Activated CD4-positive, alpha-beta memory T cell treated with anti-CD3 and anti-CD28 coated beads for 36 hours (primary cell): ENCODE measurements at regions of chr6 and their contacts with region 1.

Region 1: DNA sequence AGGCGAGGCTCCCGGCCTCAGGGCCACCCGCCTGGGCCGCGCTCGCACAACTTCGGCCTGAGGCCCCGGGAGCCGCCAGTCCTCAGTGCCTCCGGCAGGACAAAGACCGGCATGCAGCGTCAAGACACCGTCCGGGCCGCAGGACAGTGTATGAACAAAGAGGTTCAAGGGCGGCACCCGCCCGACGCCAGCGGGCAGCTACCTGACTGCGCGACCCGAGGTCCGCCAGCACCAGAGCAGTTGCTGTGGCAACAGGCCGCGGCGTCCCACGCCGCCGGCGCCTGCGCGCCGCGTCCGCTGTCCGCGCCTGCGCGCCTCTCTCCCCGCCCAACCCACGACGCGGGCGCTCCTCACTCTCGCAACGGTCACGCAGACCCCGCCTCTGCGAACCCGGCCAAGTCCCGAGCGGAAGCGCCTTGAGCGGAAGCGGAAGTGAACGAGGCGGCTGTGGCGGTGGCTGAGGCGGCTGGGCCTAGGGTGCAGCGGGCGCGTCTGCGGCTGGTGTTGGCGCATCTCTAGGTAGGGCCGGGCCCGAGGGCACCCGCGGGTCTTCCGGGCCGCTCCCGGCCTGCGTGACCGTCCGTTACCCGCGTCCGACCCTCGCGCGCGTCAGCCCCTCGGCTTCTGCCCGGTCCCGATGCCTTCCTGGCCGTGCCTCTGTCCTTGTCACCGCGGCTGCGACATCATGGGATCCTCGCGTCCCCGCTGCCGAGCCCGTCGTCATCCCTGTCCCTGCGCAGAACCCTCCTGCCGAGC is at the start of gene FAM120B:
- DNase-seq: peak; percentile 96
- H3K4me3 Mint-ChIP-seq: peak within 1 kb of the TSS; percentile 96
- H3K27ac Mint-ChIP-seq: peak within 1 kb of the TSS; percentile 87
- H3K4me1 Mint-ChIP-seq: peaks cover 41% of the 10 kb centered on the region
- H3K27me3 Mint-ChIP-seq: peaks cover 12% of the 10 kb centered on the region
- total RNA-seq, gene FAM120B: 18.4 to 20.0 TPM

Region 2: DNA sequence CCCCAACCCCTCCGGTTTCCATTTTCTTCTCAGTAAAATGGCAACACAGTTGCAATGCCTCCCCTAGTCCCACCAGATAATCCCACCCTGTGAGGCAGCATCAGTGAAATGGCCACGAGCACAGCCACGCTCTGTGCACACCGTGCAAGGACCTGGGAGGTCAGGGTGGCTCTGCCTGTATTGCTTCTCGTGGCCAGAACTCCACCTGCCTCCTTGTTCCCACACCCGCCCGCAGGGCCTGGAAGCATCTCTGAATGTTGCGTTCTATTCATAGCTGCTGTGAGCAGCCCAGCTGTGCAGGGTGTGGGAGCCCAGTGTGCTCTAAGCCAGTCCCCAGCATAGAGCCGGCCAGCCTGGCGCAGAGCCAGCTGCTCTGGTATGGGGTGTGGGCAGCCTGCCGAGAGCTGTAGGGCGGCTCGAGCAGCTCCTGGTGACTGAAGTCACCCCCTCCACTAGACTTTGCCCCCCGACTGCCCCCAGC is 176.8 kb before region 1 on chr6:
- CTCF ChIA-PET with region 1: no interaction called
- POLR2A ChIA-PET with region 1: no interaction called
- intact Hi-C with region 1: no loop called
- DNase-seq: no peak
- H3K4me3 Mint-ChIP-seq: no peak overlapping the region
- H3K27ac Mint-ChIP-seq: no peak overlapping the region
- H3K4me1 Mint-ChIP-seq: no peaks in the 10 kb centered on the region
- H3K27me3 Mint-ChIP-seq: peaks cover 3% of the 10 kb centered on the region

Region 3: DNA sequence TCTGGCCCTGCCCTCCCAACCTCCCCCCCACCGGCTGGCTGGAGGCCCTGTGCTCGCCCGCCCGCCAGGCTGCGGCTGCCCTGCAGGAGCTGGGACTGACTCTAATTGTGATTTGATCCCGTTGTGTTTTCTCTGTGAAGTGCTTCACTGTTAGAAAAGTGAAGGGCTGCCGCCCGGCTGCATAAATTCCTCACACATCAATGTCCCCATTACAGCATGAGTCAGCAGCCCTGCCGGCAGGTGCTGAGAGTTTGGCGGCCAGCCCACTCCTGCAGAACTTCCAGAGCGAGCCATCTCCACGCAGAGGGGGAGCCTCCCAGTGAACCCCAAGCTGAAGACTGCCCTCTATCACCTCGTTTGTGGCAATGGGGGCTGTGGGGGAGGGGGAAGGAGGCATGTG is 153.5 kb before region 1 on chr6:
- CTCF ChIA-PET with region 1: no interaction called
- POLR2A ChIA-PET with region 1: no interaction called
- intact Hi-C with region 1: no loop called
- DNase-seq: no peak
- H3K4me3 Mint-ChIP-seq: no peak overlapping the region
- H3K27ac Mint-ChIP-seq: no peak overlapping the region
- H3K4me1 Mint-ChIP-seq: peaks cover 9% of the 10 kb centered on the region
- H3K27me3 Mint-ChIP-seq: peaks cover 14% of the 10 kb centered on the region

Region 4: DNA sequence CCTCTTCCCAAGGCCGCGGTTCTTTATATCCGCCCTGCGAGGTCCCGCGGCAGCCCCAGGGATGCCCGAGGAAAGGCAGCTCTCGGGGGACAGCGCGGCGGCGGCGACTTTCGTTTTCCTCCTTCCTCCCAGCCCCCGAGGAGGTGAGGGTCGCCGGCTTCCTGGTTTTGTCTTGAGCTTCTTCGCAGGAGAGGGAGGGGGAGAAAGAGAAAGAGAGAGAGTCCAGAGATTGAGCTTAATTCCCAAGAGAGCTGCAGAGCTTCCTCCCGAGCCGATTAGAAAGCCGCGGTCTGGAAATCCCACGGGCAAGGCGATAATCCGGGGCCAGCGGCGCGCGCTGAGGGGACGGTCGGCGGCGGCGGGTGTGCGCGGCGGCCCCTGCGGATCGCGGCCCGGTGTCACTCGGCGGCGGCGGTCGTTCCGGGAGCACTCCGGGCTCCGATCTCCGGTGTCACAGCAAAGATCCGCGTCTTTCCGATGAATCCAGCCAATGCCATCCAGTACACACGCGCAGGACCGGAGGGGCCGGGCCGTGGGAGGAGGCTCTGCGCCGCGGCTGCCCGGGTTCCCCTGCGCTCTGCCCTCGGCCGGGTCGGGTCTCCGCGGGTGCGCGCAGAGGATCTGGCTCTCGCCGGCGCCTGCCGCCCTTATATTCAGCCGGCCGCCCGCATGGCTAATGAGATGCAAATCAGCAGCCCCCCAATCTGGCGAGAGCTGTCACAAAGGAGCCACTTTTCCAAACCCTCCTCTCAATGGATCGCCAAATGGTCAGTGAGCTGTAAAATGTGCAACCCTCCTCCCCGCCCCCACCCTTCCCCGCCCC is 16.0 kb before region 1 on chr6 and contains the start of gene DLL1:
- CTCF ChIA-PET with region 1: interaction called, 3 read pairs
- POLR2A ChIA-PET with region 1: interaction called, 3 read pairs
- intact Hi-C with region 1: loop called (anchors 1 kb)
- DNase-seq: peak; percentile 45
- H3K4me3 Mint-ChIP-seq: peak within 1 kb of the TSS; percentile 78
- H3K27ac Mint-ChIP-seq: peak within 1 kb of the TSS; percentile 54
- H3K4me1 Mint-ChIP-seq: peaks cover 38% of the 10 kb centered on the region
- H3K27me3 Mint-ChIP-seq: peaks cover 57% of the 10 kb centered on the region
- total RNA-seq, gene DLL1: 0.41 to 0.55 TPM

Region 5: GRCh38 chr6:170347091-170347490 is 40.6 kb after region 1 on chr6:
- CTCF ChIA-PET with region 1: no interaction called
- POLR2A ChIA-PET with region 1: no interaction called
- intact Hi-C with region 1: loop called (anchors 2 kb)
- DNase-seq: peak; percentile 31
- H3K4me3 Mint-ChIP-seq: no peak overlapping the region
- H3K27ac Mint-ChIP-seq: peak overlapping the region; percentile 77
- H3K4me1 Mint-ChIP-seq: peaks cover 31% of the 10 kb centered on the region
- H3K27me3 Mint-ChIP-seq: no peaks in the 10 kb centered on the region